GM12878 (cell line): ENCODE measurements at regions of chr20 and their contacts with region 1.

Region 1: DNA sequence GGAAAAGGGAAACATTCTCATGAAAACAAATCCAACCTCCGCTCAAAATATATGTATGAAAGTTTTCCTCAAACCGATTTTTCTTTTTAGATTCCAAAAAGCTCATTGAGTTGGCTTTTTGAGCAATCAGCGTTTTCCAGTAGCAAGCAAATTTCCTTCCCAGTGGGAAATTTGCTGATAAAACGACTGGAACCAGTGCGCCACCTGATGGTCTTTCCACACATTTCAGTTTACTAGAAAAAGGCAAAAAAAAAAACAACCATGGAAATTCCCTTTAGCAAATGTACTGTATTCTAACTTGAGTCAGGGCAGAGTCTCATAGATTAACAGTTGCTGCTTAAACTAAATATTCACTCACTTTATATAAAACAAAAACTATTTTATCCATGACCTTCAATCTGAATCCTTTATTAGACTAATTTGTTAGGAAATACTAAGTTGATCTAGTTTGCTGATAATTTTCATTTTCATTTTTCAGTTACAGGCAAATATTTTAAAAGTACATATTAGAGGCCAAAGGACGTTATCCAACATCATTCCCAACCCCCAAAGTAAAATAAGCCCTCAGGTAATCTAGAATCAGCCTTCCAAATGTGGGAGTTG is 271.5 kb downstream of the FOXA2 start:
- DNase-seq: no peak
- ATAC-seq: peak; percentile 50; the same call in 2 of the 3 replicates
- H3K4me3 ChIP-seq: no peak overlapping the region
- H3K27ac ChIP-seq: no peak overlapping the region
- H3K4me1 ChIP-seq: no peaks in the 10 kb centered on the region
- H3K27me3 ChIP-seq: no peaks in the 10 kb centered on the region
- CTCF ChIP-seq: peak; percentile 47 to 62 (median 49); a peak in 5 of 6 replicates
- EP300 ChIP-seq: no peak
- POLR2A ChIP-seq: no peak
- RAD21 ChIP-seq: peak; percentile 49

Region 2: DNA sequence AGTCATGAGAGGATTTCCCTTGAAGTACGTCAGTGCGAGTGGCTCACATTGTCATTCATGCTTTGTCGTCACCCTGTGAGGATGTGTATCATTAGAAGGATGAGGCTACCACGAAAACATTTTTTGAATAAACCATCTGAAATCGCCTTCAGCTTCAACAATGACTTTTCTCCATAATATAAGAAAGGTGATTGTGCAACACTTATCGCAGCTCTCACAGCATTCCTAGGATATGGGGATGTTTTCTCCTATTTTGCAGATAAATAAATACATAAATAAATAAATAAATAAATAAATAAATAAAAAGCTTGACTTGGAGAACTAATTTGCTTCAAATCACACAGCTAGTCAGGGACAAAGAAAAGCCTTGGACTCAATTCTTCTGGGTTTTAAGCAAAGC is 54.9 kb before region 1 on chr20:
- CTCF ChIA-PET with region 1: no interaction called
- POLR2A ChIA-PET with region 1: no interaction called
- RAD21 ChIA-PET with region 1: no interaction called
- SMC1A ChIA-PET with region 1: no interaction called
- in situ Hi-C with region 1: no loop called
- intact Hi-C with region 1: loop called (anchors 10 kb)
- DNase-seq: no peak
- ATAC-seq: no peak
- H3K4me3 ChIP-seq: no peak overlapping the region
- H3K27ac ChIP-seq: no peak overlapping the region
- H3K4me1 ChIP-seq: no peaks in the 10 kb centered on the region
- H3K27me3 ChIP-seq: no peaks in the 10 kb centered on the region
- CTCF ChIP-seq: no peak
- EP300 ChIP-seq: no peak
- POLR2A ChIP-seq: no peak
- RAD21 ChIP-seq: no peak

Region 3: DNA sequence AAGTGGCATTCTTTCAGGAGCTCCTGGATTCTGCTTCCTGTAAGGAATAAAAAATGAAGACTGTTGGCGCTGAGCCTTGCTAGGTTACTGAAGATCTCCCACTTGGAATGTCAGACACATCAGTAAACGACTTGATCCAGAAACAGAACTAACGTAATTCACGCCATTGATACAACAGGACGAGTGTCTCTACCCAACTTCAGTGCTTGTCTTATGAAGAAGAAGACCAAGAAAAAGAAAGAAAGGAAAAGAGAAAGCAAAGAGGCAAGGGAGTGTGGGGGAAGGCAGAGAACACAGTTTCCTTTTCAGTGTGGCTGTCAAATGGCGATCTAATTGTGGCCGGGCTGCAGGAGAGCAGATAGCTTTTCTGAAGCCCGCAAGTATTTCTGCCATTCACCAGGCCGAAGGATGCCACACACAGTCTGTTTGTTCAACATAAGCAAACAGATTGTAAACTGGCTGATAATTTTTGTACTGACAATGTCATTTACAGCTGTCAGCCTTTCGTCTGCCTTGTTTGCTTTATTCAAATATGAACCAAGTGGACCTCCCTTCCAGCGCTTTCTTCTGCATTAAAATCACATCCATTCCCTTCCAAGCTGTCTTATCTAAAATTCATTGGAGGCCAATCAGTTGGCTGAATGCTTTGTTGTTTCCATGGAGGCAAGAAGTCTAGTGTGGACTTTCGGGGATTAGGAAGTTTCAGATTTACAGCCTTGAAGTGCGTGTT is 91.0 kb after region 1 on chr20:
- CTCF ChIA-PET with region 1: no interaction called
- POLR2A ChIA-PET with region 1: no interaction called
- RAD21 ChIA-PET with region 1: no interaction called
- SMC1A ChIA-PET with region 1: no interaction called
- in situ Hi-C with region 1: no loop called
- intact Hi-C with region 1: no loop called
- DNase-seq: no peak
- ATAC-seq: no peak
- H3K4me3 ChIP-seq: peak overlapping the region; percentile 50
- H3K27ac ChIP-seq: no peak overlapping the region
- H3K4me1 ChIP-seq: no peaks in the 10 kb centered on the region; the same call in 1 of the 2 replicates
- H3K27me3 ChIP-seq: no peaks in the 10 kb centered on the region
- CTCF ChIP-seq: no peak
- EP300 ChIP-seq: no peak
- POLR2A ChIP-seq: no peak
- RAD21 ChIP-seq: no peak

Region 4: GRCh38 chr20:22453239-22454080 is 140.6 kb after region 1 on chr20:
- CTCF ChIA-PET with region 1: no interaction called
- POLR2A ChIA-PET with region 1: no interaction called
- RAD21 ChIA-PET with region 1: no interaction called
- SMC1A ChIA-PET with region 1: no interaction called
- in situ Hi-C with region 1: no loop called
- intact Hi-C with region 1: no loop called
- DNase-seq: no peak
- ATAC-seq: no peak
- H3K4me3 ChIP-seq: no peak overlapping the region
- H3K27ac ChIP-seq: no peak overlapping the region
- H3K4me1 ChIP-seq: no peaks in the 10 kb centered on the region
- H3K27me3 ChIP-seq: no peaks in the 10 kb centered on the region; a peak in 1 of 4 replicates
- CTCF ChIP-seq: peak in 2 of 3 experiments; percentile 9 to 18; a peak in 1 of 6 replicates
- EP300 ChIP-seq: no peak
- POLR2A ChIP-seq: no peak
- RAD21 ChIP-seq: no peak